HEK293 (cell line): ENCODE measurements at regions of chr7 and their contacts with region 1.

Region 1: DNA sequence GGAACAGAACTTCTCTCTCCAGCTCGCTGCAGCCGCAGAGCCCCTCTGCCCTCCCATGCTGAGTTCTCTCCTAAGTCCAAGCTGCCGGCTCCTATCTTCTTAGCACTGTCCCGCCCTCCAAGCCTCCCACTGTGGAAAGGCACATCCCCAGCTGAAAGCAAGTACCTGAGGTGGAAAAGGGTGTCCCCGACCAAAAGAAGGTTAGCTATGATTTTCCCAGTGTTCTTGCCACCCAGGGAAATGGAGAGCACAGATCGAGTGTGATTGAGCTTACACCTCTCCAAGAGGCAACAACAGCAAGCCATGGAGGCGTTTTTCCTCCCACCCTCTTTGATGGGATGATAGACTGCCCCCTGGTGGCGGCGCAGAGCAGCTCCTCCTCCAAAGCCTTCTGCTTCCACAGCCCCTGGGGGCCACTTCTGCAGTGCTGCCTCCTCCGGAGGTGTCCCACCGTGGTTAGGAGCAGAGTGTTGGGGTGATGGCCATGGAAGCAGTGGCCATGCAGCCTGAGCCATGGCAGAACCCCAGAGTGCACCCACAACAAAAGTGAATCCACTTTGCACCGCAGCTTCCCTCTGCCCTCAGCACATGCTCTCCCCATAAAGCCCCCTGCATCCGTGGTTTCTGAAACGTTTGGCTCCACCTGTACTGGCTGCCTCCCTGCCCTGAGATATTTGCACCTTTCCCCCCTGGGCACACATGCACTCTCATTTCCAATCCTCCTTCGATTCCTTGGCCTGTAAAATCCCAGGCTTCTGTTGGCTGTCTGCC is 143.1 kb upstream of the STK17A start:
- H3K4me3 ChIP-seq: no peak overlapping the region
- H3K27ac ChIP-seq: no peak overlapping the region
- H3K4me1 ChIP-seq: no peaks in the 10 kb centered on the region
- CTCF ChIP-seq: peak; percentile 45; the same call in 1 of the 2 replicates

Region 2: DNA sequence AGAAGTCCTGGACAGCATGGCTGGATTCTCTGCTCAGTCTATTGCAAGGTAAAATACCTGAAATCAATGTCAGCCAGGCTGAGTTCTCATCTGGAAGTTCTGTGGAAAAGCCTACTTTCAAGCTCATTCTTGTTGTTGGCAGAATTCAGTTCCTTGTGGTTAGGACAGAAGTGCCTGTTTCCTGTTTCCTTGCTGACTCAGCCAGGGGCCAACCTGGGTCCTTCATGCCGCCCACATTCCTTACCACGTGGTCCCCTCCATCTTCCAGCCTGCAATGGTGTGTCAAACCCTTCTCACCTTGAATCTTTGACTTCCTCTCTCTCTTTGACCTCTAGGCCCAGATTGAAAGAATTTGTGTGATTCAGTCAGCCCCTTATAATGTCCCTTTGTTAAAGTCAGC is 54.0 kb before region 1 on chr7:
- CTCF ChIA-PET with region 1: no interaction called
- POLR2A ChIA-PET with region 1: no interaction called
- H3K4me3 ChIP-seq: no peak overlapping the region
- H3K27ac ChIP-seq: no peak overlapping the region
- H3K4me1 ChIP-seq: no peaks in the 10 kb centered on the region
- CTCF ChIP-seq: no peak

Region 3: DNA sequence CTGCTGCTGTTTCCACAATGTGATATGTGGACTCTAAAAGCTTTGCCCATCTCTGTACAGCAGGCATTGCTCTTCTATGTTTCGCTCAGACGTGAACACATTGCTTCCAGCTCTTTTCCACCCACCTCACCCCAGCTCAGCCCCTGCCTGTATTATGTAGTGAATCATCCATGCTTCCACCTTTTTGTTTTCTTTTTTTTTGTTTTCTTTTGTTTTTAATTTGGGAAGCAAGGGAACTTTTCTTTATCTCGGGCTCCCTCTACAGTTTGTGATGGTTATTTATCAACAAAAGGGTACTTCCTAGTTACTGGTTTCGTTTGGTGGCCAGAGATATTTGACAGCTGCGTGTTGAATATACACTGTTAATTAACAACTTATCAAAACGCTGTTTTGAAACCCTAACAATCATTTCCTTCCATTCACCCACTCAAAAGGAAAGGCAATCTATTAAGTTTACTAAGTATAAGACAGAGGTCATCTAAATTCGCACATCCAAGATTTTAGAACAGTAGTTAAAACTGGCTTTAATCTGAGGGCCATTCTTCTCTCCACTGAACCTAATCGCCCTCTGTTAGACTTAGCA is 15.2 kb after region 1 on chr7:
- CTCF ChIA-PET with region 1: interaction called, 45 read pairs
- POLR2A ChIA-PET with region 1: no interaction called
- H3K4me3 ChIP-seq: no peak overlapping the region
- H3K27ac ChIP-seq: no peak overlapping the region
- H3K4me1 ChIP-seq: no peaks in the 10 kb centered on the region
- CTCF ChIP-seq: peak; percentile 55; the same call in 1 of the 2 replicates